ENCODE measurements at regions of chr6 and their contacts with region 1.

Region 1: GRCh38 chr6:150567823-150568383 is 31.8 kb upstream of the PLEKHG1 start:
- DNase-seq: peak; percentile 83
- H3K4me3 ChIP-seq: no peak overlapping the region
- H3K27ac ChIP-seq: peak overlapping the region; percentile 54
- H3K4me1 ChIP-seq: peaks cover 18% of the 10 kb centered on the region
- H3K27me3 ChIP-seq: no peaks in the 10 kb centered on the region
- CTCF ChIP-seq: no peak

Region 2: GRCh38 chr6:149884215-149884614 is 683.7 kb before region 1 on chr6:
- CTCF ChIA-PET with region 1: no interaction called
- POLR2A ChIA-PET with region 1: no interaction called
- intact Hi-C with region 1: no loop called
- DNase-seq: no peak
- H3K4me3 ChIP-seq: no peak overlapping the region
- H3K27ac ChIP-seq: no peak overlapping the region
- H3K4me1 ChIP-seq: no peaks in the 10 kb centered on the region
- H3K27me3 ChIP-seq: no peaks in the 10 kb centered on the region
- CTCF ChIP-seq: no peak

Region 3: DNA sequence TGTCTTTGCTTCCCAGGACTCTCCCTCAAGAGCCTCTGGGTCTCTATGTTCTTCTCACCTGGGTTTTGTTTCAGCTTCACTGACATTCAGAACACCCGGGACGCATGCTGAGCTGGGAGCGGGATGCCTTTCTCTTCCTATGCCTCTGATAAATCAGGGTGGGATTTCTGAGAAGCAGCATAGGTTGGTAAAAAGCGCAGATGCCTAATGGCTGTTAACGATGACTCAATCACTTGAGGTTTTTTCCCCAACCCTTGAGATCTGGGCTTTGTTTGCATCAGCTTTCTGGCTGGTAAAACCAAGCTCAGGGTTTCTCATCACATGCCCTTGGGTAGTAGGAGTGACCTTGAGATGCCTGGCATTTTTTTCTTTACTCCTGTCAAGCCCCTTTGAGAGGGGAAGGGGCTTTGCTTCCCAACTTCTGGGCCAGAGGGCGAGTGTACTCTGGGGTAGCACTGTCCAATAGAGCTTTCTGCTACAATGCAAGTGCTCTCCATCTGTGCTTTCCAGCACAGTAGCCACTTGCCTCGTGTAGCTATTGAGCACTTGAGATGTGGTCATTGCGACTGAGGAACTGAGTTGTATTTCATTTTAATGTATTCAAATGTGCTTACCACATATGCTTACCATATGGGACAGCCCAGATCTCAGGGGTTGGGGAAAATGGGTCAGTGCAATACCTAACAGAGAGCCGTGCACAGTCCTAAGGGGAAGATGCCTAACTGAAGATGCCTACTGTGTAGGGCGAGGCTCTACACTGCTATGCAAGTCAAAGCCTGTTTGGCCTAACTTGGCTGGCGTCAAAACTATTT is 356.0 kb before region 1 on chr6:
- CTCF ChIA-PET with region 1: no interaction called
- POLR2A ChIA-PET with region 1: interaction called, 15 read pairs
- intact Hi-C with region 1: no loop called
- DNase-seq: no peak
- H3K4me3 ChIP-seq: no peak overlapping the region
- H3K27ac ChIP-seq: no peak overlapping the region
- H3K4me1 ChIP-seq: no peaks in the 10 kb centered on the region
- H3K27me3 ChIP-seq: no peaks in the 10 kb centered on the region
- CTCF ChIP-seq: no peak